Activated CD4-positive, alpha-beta memory T cell treated with anti-CD3 and anti-CD28 coated beads for 36 hours (primary cell): ENCODE measurements at regions of chr12 and their contacts with region 1.

Region 1: GRCh38 chr12:14995583-14996425 is 23.0 kb downstream of the PDE6H start:
- DNase-seq: no peak
- H3K4me3 Mint-ChIP-seq: no peak overlapping the region
- H3K27ac Mint-ChIP-seq: no peak overlapping the region
- H3K4me1 Mint-ChIP-seq: peaks cover 25% of the 10 kb centered on the region
- H3K27me3 Mint-ChIP-seq: no peaks in the 10 kb centered on the region

Region 2: GRCh38 chr12:14629832-14630710 is 365.7 kb before region 1 on chr12:
- CTCF ChIA-PET with region 1: no interaction called
- POLR2A ChIA-PET with region 1: no interaction called
- intact Hi-C with region 1: loop called (anchors 1 kb)
- DNase-seq: peak; percentile 71
- H3K4me3 Mint-ChIP-seq: no peak overlapping the region
- H3K27ac Mint-ChIP-seq: no peak overlapping the region
- H3K4me1 Mint-ChIP-seq: no peaks in the 10 kb centered on the region
- H3K27me3 Mint-ChIP-seq: no peaks in the 10 kb centered on the region

Region 3: GRCh38 chr12:14803011-14803829 is 192.6 kb before region 1 on chr12 and contains the starts of genes C12orf60 and WBP11:
- CTCF ChIA-PET with region 1: interaction called, 12 read pairs
- POLR2A ChIA-PET with region 1: no interaction called
- intact Hi-C with region 1: no loop called
- DNase-seq: peak; percentile 93
- H3K4me3 Mint-ChIP-seq: no peak within 1 kb of the TSS
- H3K27ac Mint-ChIP-seq: no peak within 1 kb of the TSS
- H3K4me1 Mint-ChIP-seq: peaks cover 35% of the 10 kb centered on the region
- H3K27me3 Mint-ChIP-seq: no peaks in the 10 kb centered on the region
- total RNA-seq, gene C12orf60: 3.3 to 3.4 TPM
- total RNA-seq, gene WBP11: 131 to 134 TPM

Region 4: DNA sequence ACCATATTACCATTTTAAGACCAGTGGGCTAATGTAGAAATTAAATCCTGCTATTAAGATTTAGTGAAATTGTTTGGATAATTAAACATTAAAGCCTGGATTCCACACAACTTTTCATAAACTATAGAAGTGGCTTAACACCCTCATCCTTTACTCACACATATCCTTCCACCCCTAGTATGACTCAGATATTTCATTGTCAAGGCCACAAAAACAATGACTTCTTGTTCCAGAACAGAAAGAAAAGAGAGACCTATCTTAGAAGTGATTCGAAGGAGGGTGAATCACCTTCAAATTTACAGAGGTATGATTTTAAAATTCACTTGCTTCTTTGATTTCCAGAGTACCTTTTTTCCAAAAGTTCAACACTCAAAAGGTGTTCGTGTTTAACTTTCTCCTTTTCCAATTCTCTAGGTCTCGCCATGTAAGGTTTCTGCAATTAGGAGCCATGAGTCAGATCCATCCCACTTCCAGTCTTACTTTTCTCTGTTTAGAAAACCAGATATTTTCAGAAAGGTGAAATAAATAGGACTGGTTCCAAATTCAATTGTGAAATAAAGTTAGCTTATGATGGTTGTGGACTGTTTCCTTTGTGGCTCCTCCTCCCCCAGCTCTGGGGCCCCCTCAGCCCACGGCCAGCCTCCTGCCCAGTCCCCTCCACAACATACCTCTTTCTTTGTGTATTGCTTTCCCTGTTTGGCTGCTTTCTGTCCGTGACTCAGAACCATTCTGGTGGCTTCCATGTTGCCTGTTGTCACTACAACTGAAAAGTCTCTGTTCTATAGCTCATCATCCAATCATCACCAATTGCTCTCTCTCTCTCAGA is 85.5 kb before region 1 on chr12:
- CTCF ChIA-PET with region 1: interaction called, 3 read pairs
- POLR2A ChIA-PET with region 1: no interaction called
- intact Hi-C with region 1: loop called (anchors 1 kb)
- DNase-seq: peak; percentile 67
- H3K4me3 Mint-ChIP-seq: peak overlapping the region; percentile 28
- H3K27ac Mint-ChIP-seq: peak overlapping the region; percentile 90
- H3K4me1 Mint-ChIP-seq: peaks cover 37% of the 10 kb centered on the region
- H3K27me3 Mint-ChIP-seq: no peaks in the 10 kb centered on the region

Region 5: DNA sequence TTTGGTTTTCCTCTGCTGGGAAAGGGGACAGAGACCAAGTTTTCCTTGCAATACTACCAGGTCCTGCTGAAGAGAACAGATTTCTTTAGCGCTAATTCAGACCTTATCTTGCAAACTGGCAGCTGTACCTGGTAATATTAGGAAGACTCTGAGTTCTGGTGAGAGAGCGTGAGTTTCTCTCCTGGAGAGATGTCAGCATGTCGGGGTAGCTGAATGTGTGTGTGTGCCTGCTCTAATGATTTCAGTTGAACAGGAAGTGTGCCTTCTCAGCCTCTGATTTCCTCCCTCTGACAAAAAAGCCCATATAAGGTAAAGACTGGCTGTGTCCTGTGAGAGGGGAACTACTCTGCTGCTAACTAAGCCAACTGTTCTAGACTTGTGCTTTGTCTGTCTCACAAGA is 47.1 kb before region 1 on chr12:
- CTCF ChIA-PET with region 1: interaction called, 6 read pairs
- POLR2A ChIA-PET with region 1: no interaction called
- intact Hi-C with region 1: loop called (anchors 5 kb)
- DNase-seq: peak; percentile 69
- H3K4me3 Mint-ChIP-seq: peak overlapping the region; percentile 80
- H3K27ac Mint-ChIP-seq: peak overlapping the region; percentile 99
- H3K4me1 Mint-ChIP-seq: peaks cover 82% of the 10 kb centered on the region
- H3K27me3 Mint-ChIP-seq: no peaks in the 10 kb centered on the region

Region 6: GRCh38 chr12:15074351-15074750 is 78.5 kb after region 1 on chr12:
- CTCF ChIA-PET with region 1: no interaction called
- POLR2A ChIA-PET with region 1: no interaction called
- intact Hi-C with region 1: no loop called
- DNase-seq: no peak
- H3K4me3 Mint-ChIP-seq: no peak overlapping the region
- H3K27ac Mint-ChIP-seq: no peak overlapping the region
- H3K4me1 Mint-ChIP-seq: peaks cover 11% of the 10 kb centered on the region
- H3K27me3 Mint-ChIP-seq: peaks cover 6% of the 10 kb centered on the region

Region 7: DNA sequence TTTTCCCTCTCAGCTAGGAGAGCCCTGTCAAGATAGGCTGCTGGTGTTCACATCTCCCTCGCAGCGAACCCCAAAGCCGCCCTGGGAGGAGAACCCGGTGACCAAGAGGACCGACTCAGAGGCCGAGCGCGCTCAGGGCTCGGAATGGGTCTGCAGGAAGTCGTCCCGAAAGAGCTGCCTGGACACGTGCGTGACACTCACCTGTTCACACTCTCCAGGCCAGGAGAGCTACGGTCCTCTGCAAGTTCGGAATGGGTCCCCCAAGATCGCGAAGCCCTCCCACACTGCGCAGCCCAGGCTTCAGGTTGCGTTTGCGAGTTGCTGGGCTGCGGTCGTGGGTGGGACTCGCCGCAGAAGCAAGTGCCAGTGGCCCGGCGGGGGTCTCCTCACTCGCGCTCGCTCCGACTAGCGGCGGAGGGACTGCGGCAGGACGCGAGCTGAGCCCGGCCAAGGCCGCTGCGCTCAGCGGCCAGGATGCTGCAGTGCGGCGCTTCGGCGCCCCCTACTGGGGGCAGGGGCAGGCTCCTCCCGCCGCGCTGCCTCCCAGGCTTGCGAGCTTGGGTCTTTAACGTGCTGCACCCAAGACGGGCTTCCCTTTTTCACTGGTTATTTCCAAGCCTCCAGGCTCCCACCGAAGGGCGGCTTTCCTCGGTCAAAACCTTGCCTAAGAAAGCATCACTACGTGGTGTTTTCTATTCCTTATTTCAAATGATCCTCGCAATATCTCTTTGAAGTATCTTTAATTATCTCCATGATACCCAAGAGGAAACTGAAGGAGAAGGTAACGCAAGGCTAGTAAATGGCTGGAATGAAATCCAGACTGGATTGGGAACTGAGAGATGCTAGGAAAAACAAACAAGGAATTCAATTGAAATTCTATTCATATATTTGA is 225.4 kb after region 1 on chr12 and contains the start of gene RERG:
- CTCF ChIA-PET with region 1: no interaction called
- POLR2A ChIA-PET with region 1: no interaction called
- intact Hi-C with region 1: loop called (anchors 2 kb)
- DNase-seq: peak; percentile 79
- H3K4me3 Mint-ChIP-seq: peak within 1 kb of the TSS; percentile 55
- H3K27ac Mint-ChIP-seq: no peak within 1 kb of the TSS
- H3K4me1 Mint-ChIP-seq: no peaks in the 10 kb centered on the region
- H3K27me3 Mint-ChIP-seq: peaks cover 19% of the 10 kb centered on the region
- total RNA-seq, gene RERG: not detected